Right cardiac atrium (tissue), 5 donors: ENCODE measurements at regions of chr12 and their contacts with region 1.

Region 1: DNA sequence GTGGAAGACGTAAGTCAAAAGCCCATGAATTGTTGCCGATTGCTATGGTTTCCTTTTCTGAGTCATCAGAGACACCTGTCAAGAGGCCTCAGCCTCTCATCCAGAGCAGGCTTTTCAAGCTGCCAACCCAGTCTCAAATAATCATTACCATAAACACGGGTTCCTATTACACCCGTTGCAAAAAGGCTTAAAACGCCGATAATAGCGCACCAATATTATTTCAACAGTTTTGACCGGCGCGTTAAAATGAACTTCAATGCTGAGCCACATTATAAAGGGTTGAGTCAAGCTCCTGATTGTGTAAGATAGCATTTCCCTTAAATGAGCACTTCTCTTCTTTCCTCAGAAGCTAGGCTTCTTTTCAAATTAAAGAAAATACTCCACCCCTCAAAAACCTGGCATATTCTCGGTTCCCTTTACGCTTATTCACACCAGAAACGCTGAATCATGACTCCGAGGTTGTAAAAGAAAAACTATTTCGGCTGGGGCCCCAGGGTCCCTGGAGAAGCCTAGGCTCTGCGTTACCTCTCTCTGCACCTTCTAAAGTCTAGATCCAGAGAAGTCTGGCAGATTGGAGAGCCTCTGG is 1.4 kb downstream of the TMTC1 start:
- DNase-seq: no peak
- ATAC-seq: peak; percentile 35 to 61
- H3K4me3 ChIP-seq: peak overlapping the region; percentile 92
- H3K27ac ChIP-seq: peak overlapping the region; percentile 70
- H3K4me1 ChIP-seq: peaks cover 7% of the 10 kb centered on the region
- H3K27me3 ChIP-seq: no peaks in the 10 kb centered on the region

Region 2: DNA sequence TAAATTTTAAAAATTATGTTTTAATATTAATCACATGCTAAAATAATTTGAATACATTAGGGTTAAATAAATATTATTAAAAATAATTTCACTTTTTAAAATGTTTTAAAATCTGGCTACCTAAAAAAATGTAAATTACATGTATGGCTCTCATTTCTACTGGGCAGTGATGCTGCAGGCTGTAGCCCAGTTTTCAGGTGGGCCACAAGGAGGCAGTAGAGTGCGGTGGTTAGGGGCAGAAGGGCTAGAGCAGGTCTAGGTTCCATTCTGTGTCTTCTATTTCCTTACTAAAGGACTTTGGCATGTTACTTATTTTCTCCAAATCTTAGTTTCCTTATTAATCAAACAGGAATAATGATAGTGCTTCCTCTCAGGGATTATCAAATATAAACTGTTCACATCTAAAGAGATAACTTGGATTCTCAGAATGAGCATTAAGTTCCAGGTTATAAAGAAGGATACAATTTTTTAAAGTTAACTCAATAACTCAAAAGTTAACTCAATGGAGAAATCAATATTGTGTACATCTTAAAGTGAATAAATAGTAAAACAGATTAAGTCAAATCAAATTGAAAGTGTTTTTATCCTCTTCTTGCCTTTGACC is 230.0 kb before region 1 on chr12:
- intact Hi-C with region 1: loop called in 2 of 4 experiments (anchors 10 kb)
- DNase-seq: peak; percentile 74 to 84 (median 82)
- ATAC-seq: peak; percentile 91 to 92
- H3K4me3 ChIP-seq: no peak overlapping the region
- H3K27ac ChIP-seq: no peak overlapping the region
- H3K4me1 ChIP-seq: no peaks in the 10 kb centered on the region
- H3K27me3 ChIP-seq: no peaks in the 10 kb centered on the region

Region 3: GRCh38 chr12:29869946-29870345 is 87.6 kb after region 1 on chr12:
- intact Hi-C with region 1: loop called in 1 of 4 experiments (anchors 10 kb)
- DNase-seq: no peak
- ATAC-seq: no peak
- H3K4me3 ChIP-seq: no peak overlapping the region
- H3K27ac ChIP-seq: no peak overlapping the region
- H3K4me1 ChIP-seq: no peaks in the 10 kb centered on the region
- H3K27me3 ChIP-seq: no peaks in the 10 kb centered on the region

Region 4: GRCh38 chr12:29980304-29980703 is 197.9 kb after region 1 on chr12:
- intact Hi-C with region 1: no loop called
- DNase-seq: no peak
- ATAC-seq: no peak
- H3K4me3 ChIP-seq: no peak overlapping the region
- H3K27ac ChIP-seq: no peak overlapping the region
- H3K4me1 ChIP-seq: no peaks in the 10 kb centered on the region
- H3K27me3 ChIP-seq: no peaks in the 10 kb centered on the region